Psoas muscle (tissue), 8 donors: ENCODE measurements at regions of chr1 and their contacts with region 1.

Region 1: GRCh38 chr1:201895913-201896807 is 7.5 kb downstream of the SHISA4 start:
- DNase-seq: peak; percentile 91 to 94
- ATAC-seq: peak; percentile 92 to 93 (median 92)
- H3K4me3 ChIP-seq: no peak overlapping the region
- H3K27ac ChIP-seq: peak overlapping the region; percentile 95
- H3K4me1 ChIP-seq: peaks cover 42% of the 10 kb centered on the region
- H3K27me3 ChIP-seq: no peaks in the 10 kb centered on the region
- CTCF ChIP-seq: peak; percentile 97

Region 2: GRCh38 chr1:201955009-201955728 is 59.0 kb after region 1 on chr1 and contains the start of gene TIMM17A:
- intact Hi-C with region 1: loop called (anchors 5 kb)
- DNase-seq: peak; percentile 97 to 98
- ATAC-seq: peak; percentile 100
- H3K4me3 ChIP-seq: peak within 1 kb of the TSS; percentile 77
- H3K27ac ChIP-seq: peak within 1 kb of the TSS; percentile 86
- H3K4me1 ChIP-seq: peaks cover 6% of the 10 kb centered on the region
- H3K27me3 ChIP-seq: no peaks in the 10 kb centered on the region
- CTCF ChIP-seq: no peak
- total RNA-seq, gene TIMM17A: 45.4 to 132 (median 68.4) TPM

Region 3: GRCh38 chr1:201970334-201971159 is 74.4 kb after region 1 on chr1:
- intact Hi-C with region 1: loop called (anchors 1 to 2 kb)
- DNase-seq: no peak
- ATAC-seq: peak in 2 of 4 donors; percentile 43 to 48
- H3K4me3 ChIP-seq: no peak overlapping the region
- H3K27ac ChIP-seq: peak overlapping the region; percentile 3
- H3K4me1 ChIP-seq: peaks cover 7% of the 10 kb centered on the region
- H3K27me3 ChIP-seq: no peaks in the 10 kb centered on the region
- CTCF ChIP-seq: no peak

Region 4: DNA sequence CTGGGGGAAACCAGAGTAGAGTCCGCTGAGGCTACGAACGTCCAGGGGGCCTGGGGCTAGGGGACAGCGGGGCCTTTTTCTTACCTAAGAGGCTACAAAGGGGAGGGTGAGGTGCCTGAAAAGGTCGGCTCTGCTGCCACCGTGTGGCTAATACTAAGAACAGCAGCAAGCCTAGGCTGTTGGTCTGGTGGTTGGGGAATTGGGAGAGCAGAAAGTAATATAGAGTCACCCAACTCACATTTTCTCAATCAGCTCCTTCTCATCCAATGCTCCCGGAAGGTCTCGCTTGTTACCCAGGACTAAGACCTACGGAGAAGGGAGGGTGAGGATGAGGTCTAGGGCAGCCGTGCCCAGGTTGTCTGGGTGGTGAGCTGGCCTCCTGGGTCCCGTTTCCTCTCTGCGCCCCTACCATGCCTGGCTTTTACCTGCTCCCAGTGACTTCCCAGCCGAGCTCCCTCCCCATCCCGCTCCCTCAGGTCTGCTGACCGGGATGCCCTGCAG is 239.1 kb after region 1 on chr1:
- intact Hi-C with region 1: loop called in 1 of 2 experiments (anchors 10 kb)
- DNase-seq: peak in 1 of 2 donors; percentile 49
- ATAC-seq: peak; percentile 73 to 81 (median 77)
- H3K4me3 ChIP-seq: no peak overlapping the region
- H3K27ac ChIP-seq: no peak overlapping the region
- H3K4me1 ChIP-seq: peaks cover 13% of the 10 kb centered on the region
- H3K27me3 ChIP-seq: no peaks in the 10 kb centered on the region
- CTCF ChIP-seq: peak; percentile 83

Region 5: GRCh38 chr1:202170726-202171125 is 274.6 kb after region 1 on chr1:
- intact Hi-C with region 1: no loop called
- DNase-seq: no peak
- ATAC-seq: peak in 1 of 4 donors; percentile 34
- H3K4me3 ChIP-seq: no peak overlapping the region
- H3K27ac ChIP-seq: no peak overlapping the region
- H3K4me1 ChIP-seq: no peaks in the 10 kb centered on the region
- H3K27me3 ChIP-seq: peaks cover 0 to 2% (median 0%) of the 10 kb centered on the region in 3 donors
- CTCF ChIP-seq: no peak

Region 6: GRCh38 chr1:202348509-202349205 is 452.5 kb after region 1 on chr1 and contains the start of gene PPP1R12B:
- intact Hi-C with region 1: no loop called
- DNase-seq: peak; percentile 97 to 99
- ATAC-seq: peak; percentile 95 to 99 (median 98)
- H3K4me3 ChIP-seq: peak within 1 kb of the TSS; percentile 76
- H3K27ac ChIP-seq: peak within 1 kb of the TSS; percentile 90
- H3K4me1 ChIP-seq: peaks cover 23% of the 10 kb centered on the region
- H3K27me3 ChIP-seq: no peaks in the 10 kb centered on the region
- CTCF ChIP-seq: no peak
- total RNA-seq, gene PPP1R12B: 86.1 to 189 (median 158) TPM